ENCODE measurements at regions of chr2 and their contacts with region 1.

Region 1: GRCh38 chr2:188524519-188525113 is 232.9 kb downstream of the GULP1 start:
- DNase-seq: peak; percentile 13 to 46 (median 16)
- ATAC-seq: peak; percentile 63; the same call in 1 of the 3 replicates
- H3K4me3 ChIP-seq: no peak overlapping the region
- H3K27ac ChIP-seq: no peak overlapping the region
- H3K4me1 ChIP-seq: no peaks in the 10 kb centered on the region
- H3K27me3 ChIP-seq: no peaks in the 10 kb centered on the region
- CTCF ChIP-seq: peak; percentile 33 to 66 (median 34); a peak in 5 of 6 replicates
- EP300 ChIP-seq: no peak
- POLR2A ChIP-seq: no peak
- RAD21 ChIP-seq: peak; percentile 28 to 55; a peak in 2 of 4 replicates

Region 2: DNA sequence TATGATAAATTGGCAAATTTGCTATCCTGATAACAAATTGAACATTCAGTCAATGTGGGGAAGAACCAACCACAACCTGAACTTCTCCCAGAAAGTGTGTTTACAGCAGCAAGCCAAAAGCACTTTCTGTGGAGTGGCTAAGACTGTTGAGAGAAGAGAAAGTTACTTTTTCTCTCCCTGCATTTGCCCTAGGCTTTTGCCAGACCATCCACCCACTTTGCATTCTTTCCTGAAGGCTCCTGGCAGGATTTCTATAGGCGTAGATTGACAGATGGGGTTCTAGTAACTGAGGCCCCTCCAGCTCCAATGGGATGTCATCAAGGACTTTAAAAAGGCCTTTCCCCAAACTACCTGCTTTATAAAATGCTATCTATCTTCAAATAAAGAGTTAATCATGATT is 17.8 kb before region 1 on chr2:
- CTCF ChIA-PET with region 1: no interaction called
- POLR2A ChIA-PET with region 1: no interaction called
- in situ Hi-C with region 1: no loop called
- intact Hi-C with region 1: no loop called
- DNase-seq: no peak
- ATAC-seq: no peak
- H3K4me3 ChIP-seq: no peak overlapping the region
- H3K27ac ChIP-seq: no peak overlapping the region
- H3K4me1 ChIP-seq: no peaks in the 10 kb centered on the region
- H3K27me3 ChIP-seq: no peaks in the 10 kb centered on the region
- CTCF ChIP-seq: no peak
- EP300 ChIP-seq: no peak
- POLR2A ChIP-seq: no peak
- RAD21 ChIP-seq: no peak

Region 3: DNA sequence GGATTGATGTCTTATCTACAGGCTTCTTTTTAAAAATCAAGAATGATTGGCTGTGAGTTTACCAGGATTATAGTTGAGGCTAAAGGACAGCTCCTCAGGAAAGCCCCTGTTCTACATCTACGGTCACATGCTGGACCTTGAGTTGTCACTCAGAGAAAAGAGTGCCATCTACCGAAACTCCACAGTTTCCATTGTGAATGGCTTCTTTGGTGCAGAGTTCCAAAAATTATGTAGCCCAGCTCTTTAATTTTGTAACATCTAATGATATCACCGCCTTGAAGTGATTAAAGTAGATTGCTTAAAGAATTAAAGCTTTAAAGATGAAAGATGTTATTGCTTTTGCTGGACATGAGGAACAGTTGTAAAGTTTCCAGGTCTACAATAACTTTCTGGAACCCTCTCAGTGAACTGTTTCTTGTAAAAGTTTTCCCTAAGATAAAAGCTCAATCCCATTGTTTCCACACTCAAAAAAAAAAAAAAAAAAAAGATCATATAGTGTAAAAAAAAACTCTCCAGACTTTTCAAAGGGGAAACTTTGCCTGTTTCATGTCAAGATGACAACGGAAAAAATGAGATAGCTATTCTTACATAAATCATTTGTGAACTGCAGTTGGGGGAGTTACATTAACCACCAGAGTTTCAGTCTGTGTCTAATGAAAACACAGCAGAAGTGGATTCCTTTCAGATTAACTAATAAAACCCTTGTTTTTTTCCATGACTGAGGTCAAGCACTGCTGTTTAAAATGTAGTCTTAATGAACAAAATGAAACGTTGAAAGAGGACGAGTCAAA is 453.9 kb after region 1 on chr2:
- CTCF ChIA-PET with region 1: no interaction called
- POLR2A ChIA-PET with region 1: no interaction called
- in situ Hi-C with region 1: no loop called
- intact Hi-C with region 1: loop called (anchors 10 kb)
- DNase-seq: no peak
- ATAC-seq: no peak
- H3K4me3 ChIP-seq: no peak overlapping the region
- H3K27ac ChIP-seq: no peak overlapping the region
- H3K4me1 ChIP-seq: no peaks in the 10 kb centered on the region
- H3K27me3 ChIP-seq: no peaks in the 10 kb centered on the region
- CTCF ChIP-seq: no peak
- EP300 ChIP-seq: no peak
- POLR2A ChIP-seq: no peak
- RAD21 ChIP-seq: peak in 1 of 2 experiments; percentile 8; a peak in 1 of 4 replicates

Region 4: DNA sequence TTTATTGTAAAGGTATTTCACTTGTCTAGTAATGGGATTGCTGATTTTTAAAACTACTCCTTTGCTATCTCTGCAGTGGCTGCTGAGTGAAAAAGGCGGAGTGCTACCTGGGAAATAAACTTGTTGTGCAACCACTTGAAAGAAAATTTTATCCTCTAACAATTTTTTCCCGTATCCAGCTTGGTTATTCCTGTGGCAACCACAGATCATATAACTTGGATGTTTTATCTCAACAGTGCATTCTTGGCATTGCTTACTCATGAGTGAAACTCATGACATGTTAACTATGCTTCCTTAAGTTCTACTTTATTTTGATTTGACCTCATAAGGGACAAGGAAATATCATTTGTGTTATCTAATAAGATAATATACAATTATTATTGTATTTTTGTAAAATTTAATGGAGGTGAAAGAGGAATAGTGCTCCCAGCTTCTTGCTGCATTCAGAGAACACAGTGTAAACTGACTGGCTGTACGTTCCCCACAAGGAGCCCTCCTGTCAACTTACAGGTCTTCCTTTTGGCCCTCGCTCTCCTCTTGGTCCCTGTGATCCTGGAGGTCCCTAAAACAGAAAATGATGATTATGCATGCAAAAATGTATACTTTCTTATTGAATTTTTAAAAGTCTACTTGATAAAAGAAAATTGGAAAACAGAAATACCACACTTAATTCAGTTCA is 572.3 kb after region 1 on chr2:
- CTCF ChIA-PET with region 1: no interaction called
- POLR2A ChIA-PET with region 1: no interaction called
- in situ Hi-C with region 1: no loop called
- intact Hi-C with region 1: loop called (anchors 5 kb)
- DNase-seq: no peak
- ATAC-seq: no peak
- H3K4me3 ChIP-seq: no peak overlapping the region
- H3K27ac ChIP-seq: no peak overlapping the region
- H3K4me1 ChIP-seq: no peaks in the 10 kb centered on the region
- H3K27me3 ChIP-seq: no peaks in the 10 kb centered on the region
- CTCF ChIP-seq: no peak
- EP300 ChIP-seq: no peak
- POLR2A ChIP-seq: no peak
- RAD21 ChIP-seq: no peak

Region 5: DNA sequence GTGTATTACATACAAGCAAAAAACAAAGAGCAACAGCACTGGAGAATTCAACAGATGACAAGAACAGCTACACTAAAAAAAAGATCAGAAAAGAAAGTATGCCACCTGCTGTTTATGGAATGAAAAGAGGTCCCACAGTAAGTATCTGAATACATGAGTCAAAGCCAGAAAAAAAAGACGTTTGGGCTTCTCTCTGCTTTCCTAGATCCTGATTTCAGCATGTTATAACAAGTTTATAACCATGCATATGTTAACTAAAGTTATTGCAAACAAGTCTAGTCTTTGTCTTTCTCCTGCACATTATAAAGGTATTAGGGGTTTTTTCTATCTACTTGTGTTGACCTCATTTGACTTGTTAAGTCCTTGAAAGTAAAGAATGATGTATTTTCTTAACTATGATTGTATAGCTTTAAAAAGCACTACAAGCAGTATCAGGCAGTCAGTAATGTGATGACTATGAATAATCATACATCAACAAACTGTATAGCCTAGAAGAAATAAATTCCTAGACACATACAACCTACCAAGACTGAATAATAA is 763.4 kb after region 1 on chr2:
- CTCF ChIA-PET with region 1: interaction called, 5 read pairs
- POLR2A ChIA-PET with region 1: no interaction called
- in situ Hi-C with region 1: no loop called
- intact Hi-C with region 1: loop called (anchors 5 kb)
- DNase-seq: peak in 1 of 4 experiments; percentile 28
- ATAC-seq: peak; percentile 68; the same call in 2 of the 3 replicates
- H3K4me3 ChIP-seq: no peak overlapping the region
- H3K27ac ChIP-seq: no peak overlapping the region
- H3K4me1 ChIP-seq: no peaks in the 10 kb centered on the region
- H3K27me3 ChIP-seq: no peaks in the 10 kb centered on the region
- CTCF ChIP-seq: peak in 2 of 3 experiments; percentile 54 to 59; a peak in 3 of 6 replicates
- EP300 ChIP-seq: no peak
- POLR2A ChIP-seq: no peak
- RAD21 ChIP-seq: peak; percentile 63 to 75

Region 6: GRCh38 chr2:189347540-189347939 is 822.9 kb after region 1 on chr2:
- CTCF ChIA-PET with region 1: no interaction called
- POLR2A ChIA-PET with region 1: no interaction called
- in situ Hi-C with region 1: no loop called
- intact Hi-C with region 1: loop called (anchors 10 kb)
- DNase-seq: peak; percentile 25 to 75 (median 46)
- ATAC-seq: peak; percentile 97
- H3K4me3 ChIP-seq: no peak overlapping the region
- H3K27ac ChIP-seq: no peak overlapping the region; the same call in 2 of the 3 replicates
- H3K4me1 ChIP-seq: peaks cover 0 to 7% of the 10 kb centered on the region in 2 experiments; a peak in 2 of 5 replicates
- H3K27me3 ChIP-seq: no peaks in the 10 kb centered on the region
- CTCF ChIP-seq: peak; percentile 45 to 58 (median 58); a peak in 5 of 6 replicates
- EP300 ChIP-seq: no peak
- POLR2A ChIP-seq: no peak
- RAD21 ChIP-seq: peak; percentile 63 to 64